ENCODE measurements at regions of chr5 and their contacts with region 1.

Region 1: GRCh38 chr5:64646169-64646568 is 44.1 kb upstream of the SHISAL2B start:
- DNase-seq: no peak

Region 2: GRCh38 chr5:64532212-64532611 is 114.0 kb before region 1 on chr5:
- intact Hi-C with region 1: no loop called
- DNase-seq: no peak

Region 3: GRCh38 chr5:64666078-64666477 is 19.9 kb after region 1 on chr5:
- intact Hi-C with region 1: no loop called
- DNase-seq: no peak

Region 4: GRCh38 chr5:65125591-65126541 is 479.7 kb after region 1 on chr5:
- intact Hi-C with region 1: loop called in 1 of 2 experiments (anchors 5 kb)
- DNase-seq: no peak

Measured in posterior vena cava (tissue), 2 donors.